Left lung (tissue), 14 donors: ENCODE measurements at regions of chr1 and their contacts with region 1.

Region 1: DNA sequence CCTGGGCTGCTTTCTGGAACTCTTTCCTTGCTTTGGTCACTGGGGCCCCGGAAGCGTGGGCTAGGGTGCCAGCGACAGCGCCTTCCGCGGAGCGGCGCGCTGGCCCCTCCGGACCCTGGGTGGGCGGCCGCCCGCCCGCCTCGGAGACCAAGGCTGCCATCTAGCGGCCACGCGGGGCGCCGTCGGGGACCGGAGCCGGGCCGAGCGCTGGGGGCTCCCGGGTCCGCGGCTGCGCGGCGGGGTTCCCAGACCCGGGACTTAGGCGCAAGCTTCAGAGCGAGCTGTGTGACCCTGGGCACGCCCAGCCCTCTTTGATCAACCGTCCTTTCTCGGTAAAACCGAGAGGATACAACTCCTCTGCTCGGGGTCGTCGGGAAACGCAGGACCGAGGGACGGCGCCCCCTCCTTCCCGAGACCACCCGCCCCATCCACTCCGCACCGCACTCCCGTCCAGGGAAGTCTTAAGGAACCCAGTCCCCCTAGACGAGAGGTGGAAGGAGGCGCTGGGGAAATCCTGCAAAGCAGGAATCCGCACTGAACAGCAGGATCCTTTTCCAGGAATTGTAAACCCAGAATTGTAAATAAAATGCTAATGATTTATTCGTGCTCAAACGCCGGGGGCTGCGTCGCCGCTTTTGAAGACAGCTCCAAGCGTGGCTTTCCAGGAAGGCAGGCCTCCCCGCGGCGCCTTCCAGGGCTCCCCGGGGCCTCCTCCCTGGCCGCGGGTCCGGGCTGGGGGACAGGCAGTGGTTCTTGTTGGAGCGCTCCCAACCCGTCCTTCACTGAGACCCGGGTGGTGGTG is 41.2 kb downstream of the RRAGC start:
- DNase-seq: peak in 3 of 4 donors; percentile 41 to 92 (median 61)
- ATAC-seq: peak; percentile 83
- H3K4me3 ChIP-seq: peak overlapping the region in 1 of 2 donors; percentile 24
- H3K27ac ChIP-seq: no peak overlapping the region
- H3K4me1 ChIP-seq: peaks cover 9 to 14% of the 10 kb centered on the region in 2 donors
- H3K27me3 ChIP-seq: peaks cover 51 to 63% of the 10 kb centered on the region in 2 donors
- CTCF ChIP-seq: peak; percentile 85 to 94

Region 2: DNA sequence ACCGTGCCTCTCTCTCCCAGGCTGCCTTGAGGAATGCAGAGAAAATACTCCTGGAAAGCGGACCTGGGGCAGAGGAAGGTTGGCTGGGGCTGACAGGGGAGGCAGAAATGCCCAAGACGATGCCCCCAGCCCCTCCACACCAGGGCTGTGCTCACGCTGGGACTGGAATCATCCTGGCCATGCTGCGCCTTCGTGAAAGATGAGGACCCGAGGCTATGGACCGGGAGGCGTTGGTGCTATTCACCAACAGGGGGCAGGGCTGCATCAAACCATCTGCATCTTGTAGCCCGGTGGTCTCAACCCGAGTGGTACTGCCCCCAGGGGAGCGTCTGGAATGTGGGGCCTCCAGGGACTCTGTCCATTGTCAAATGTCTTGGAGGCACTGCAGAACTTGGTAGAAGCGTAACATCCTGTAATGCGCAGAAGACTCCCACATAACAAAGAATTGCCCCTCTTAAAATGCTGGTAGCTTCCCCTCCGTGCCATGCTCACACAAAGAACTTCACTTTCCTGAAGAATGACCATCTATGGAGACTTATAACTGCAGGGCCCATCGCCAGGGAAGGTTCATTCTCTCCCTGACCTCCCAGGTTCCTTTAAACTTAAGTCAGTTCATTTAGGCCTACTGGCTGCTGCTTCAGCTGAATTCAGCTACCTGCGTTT is 210.0 kb before region 1 on chr1:
- intact Hi-C with region 1: loop called in 1 of 2 experiments (anchors 10 kb)
- DNase-seq: no peak
- ATAC-seq: peak; percentile 56
- H3K4me3 ChIP-seq: no peak overlapping the region
- H3K27ac ChIP-seq: no peak overlapping the region
- H3K4me1 ChIP-seq: no peaks in the 10 kb centered on the region
- H3K27me3 ChIP-seq: peaks cover 0 to 19% of the 10 kb centered on the region in 2 donors
- CTCF ChIP-seq: peak; percentile 38 to 47

Region 3: GRCh38 chr1:38741341-38741740 is 77.0 kb before region 1 on chr1:
- intact Hi-C with region 1: no loop called
- DNase-seq: peak in 1 of 4 donors; percentile 24
- ATAC-seq: no peak
- H3K4me3 ChIP-seq: no peak overlapping the region
- H3K27ac ChIP-seq: no peak overlapping the region
- H3K4me1 ChIP-seq: no peaks in the 10 kb centered on the region
- H3K27me3 ChIP-seq: no peaks in the 10 kb centered on the region
- CTCF ChIP-seq: no peak

Region 4: GRCh38 chr1:38763121-38763520 is 55.3 kb before region 1 on chr1:
- intact Hi-C with region 1: no loop called
- DNase-seq: no peak
- ATAC-seq: no peak
- H3K4me3 ChIP-seq: no peak overlapping the region
- H3K27ac ChIP-seq: no peak overlapping the region
- H3K4me1 ChIP-seq: no peaks in the 10 kb centered on the region
- H3K27me3 ChIP-seq: peaks cover 0 to 20% of the 10 kb centered on the region in 2 donors
- CTCF ChIP-seq: no peak

Region 5: GRCh38 chr1:39158327-39159086 is 340.1 kb after region 1 on chr1:
- intact Hi-C with region 1: no loop called
- DNase-seq: peak in 3 of 4 donors; percentile 57 to 95 (median 91)
- ATAC-seq: peak; percentile 70
- H3K4me3 ChIP-seq: peak overlapping the region in 1 of 2 donors; percentile 8
- H3K27ac ChIP-seq: peak overlapping the region; percentile 79 to 88
- H3K4me1 ChIP-seq: peaks cover 48 to 70% of the 10 kb centered on the region in 2 donors
- H3K27me3 ChIP-seq: no peaks in the 10 kb centered on the region
- CTCF ChIP-seq: no peak